Cardiac septum (tissue), 1 donor: ENCODE measurements at regions of chr17 and their contacts with region 1.

Region 1: DNA sequence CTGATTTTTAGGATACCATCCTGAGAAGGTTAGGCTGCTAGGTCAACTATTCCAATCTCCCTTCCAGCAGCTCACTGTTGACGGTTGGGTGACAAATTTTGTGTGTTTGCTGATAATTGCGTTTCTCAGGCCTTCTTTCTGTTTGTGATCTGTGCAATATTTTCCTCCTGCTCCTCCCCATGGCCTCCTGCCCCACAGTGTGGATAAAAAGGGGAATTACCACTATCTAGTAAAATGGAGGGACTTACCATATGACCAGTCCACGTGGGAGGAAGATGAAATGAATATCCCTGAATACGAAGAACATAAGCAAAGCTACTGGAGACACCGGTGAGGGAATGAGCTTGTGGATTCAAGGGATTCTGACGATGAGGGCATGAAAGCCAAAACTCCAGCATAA is 9.2 kb downstream of the CHD3 start:
- DNase-seq: no peak

Region 2: DNA sequence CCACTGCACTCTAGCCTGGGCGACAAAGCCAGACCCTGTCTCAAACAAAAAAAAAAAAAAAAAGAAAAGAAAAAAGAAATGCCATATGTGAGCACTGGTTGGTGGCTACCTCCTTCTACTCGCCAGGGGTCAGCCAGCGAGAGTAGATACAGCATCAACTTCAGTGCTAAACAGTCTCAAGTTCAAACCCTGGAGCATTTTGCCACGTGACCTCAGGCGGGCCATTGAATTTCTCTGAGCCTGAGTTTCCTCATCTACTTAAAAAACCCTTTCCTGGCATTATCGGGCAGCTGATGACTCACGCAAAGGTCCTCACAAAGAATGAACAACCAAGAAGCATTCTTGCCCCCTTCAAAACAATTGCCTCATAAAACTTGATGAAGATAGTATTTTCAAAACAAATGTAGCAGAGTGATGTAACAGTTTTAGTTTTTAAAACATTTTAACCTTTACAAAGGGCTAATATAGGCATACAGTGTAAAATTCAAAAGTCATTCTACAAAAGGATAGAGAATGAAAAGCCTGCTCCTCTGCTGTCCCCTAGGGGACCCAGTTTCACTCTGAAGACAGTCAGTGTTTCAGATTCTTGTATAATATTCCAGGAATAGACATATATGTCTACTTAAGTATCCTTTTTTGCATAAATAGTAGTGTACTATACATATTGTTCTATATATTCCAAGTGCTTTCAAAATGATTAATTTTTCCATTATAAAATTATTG is 151.9 kb before region 1 on chr17:
- intact Hi-C with region 1: loop called (anchors 10 kb)
- DNase-seq: peak; percentile 76

Region 3: DNA sequence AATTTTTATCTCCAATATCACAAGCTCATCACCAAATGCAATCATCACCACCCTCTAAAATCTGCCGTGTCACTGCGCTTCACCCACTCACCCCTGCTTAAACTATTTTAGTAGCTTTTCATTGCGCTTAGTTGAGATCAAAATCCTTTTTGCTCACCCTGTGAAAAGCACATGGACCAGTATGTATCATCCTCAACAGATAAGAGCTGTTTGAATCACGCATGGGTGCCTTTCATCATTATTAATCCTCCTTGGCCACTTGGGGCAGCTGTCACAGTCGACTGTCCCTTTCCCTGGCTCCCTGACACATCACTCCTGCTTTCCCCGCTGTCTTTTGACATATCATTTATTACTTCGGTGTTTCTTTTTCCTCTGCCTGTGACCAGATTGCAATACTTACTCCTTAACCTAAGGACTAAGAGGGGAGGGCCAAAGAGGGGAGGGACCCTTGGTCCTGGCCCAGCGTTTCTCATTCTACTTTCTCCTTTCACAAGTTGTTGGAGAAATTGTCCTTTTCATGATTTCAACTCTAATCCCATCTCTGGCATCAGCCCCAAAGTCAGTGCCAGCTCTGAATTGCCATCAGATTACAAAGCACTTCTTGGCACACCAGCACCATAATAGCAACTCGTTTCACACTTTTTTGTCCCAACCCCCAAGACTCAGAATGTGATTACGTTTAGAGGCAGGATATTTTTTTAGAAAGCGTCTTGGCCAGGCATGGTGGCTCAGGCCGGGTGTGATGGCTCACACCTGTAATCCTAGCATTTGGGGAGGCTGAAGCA is 72.4 kb before region 1 on chr17:
- intact Hi-C with region 1: loop called (anchors 2 kb)
- DNase-seq: no peak

Region 4: DNA sequence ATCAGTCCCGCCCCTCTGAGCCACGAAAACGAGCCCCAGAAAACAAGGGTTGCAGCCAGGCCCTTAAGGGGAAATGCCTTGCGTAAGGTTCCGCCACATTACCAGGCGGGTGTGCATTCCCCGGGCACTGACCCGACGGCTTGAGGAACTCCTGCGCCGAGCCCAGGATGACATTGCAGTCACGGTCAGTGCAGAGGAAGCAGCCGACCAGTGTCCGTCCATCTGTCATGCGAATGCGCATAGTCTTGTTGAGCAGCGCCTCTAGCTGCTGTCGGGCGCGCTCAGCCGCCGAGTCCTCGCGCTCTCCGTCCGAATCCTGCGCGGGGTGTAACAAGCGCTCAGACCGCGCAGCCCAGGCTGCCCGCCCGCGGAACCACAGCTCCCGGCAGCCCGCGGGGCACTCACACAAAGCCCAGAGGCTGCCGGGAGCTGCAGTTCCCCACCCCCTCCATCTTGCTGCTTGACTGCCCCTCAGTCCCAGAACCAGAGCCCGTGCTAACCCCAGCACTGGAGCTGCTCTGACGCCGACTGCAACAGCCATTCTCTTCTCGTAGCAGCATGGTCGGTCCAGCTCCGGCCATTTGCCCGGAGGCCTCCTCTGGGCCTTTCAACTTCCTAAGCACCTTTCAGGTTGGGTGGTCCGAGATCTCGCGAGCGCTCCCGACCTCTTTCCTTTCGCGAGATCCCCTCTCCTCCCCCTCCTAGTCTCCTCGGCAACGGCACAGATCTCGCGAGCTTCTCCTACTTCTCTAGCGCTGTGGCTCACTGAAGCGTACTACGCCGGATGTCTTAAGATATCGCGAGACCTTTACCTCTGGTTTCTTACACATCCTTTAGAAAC is 40.7 kb before region 1 on chr17 and contains the start of gene NAA38:
- intact Hi-C with region 1: loop called (anchors 2 kb)
- DNase-seq: peak; percentile 96
- total RNA-seq, gene NAA38: 68.8 TPM

Region 5: GRCh38 chr17:7880076-7880868 is 17.5 kb before region 1 on chr17:
- intact Hi-C with region 1: no loop called
- DNase-seq: no peak